CD8-positive, alpha-beta memory T cell (primary cell): ENCODE measurements at regions of chr13 and their contacts with region 1.

Region 1: DNA sequence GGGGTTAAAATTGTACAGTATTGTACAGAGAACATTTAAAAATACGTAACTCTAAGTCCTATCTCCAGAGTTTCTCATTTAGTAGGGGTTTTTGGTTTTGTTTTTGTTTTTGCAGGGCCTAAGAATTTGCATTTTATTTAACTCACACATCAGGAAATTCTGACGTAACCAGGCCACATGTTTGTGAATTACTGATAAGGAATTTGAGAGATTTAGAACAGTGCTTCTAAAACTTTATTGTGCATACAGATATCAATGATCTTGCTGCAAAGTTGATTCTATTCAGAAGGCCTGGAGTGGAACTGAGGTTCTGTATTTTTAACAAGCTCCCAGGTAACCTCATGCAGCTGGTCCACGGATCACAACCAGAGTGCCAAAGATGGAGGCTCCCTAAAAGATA is 49.3 kb downstream of the LIG4 start:
- DNase-seq: no peak
- H3K4me3 ChIP-seq: no peak overlapping the region
- H3K4me3 Mint-ChIP-seq: no peak overlapping the region
- H3K27ac ChIP-seq: no peak overlapping the region
- H3K27ac Mint-ChIP-seq: no peak overlapping the region
- H3K4me1 ChIP-seq: no peaks in the 10 kb centered on the region
- H3K4me1 Mint-ChIP-seq: no peaks in the 10 kb centered on the region
- H3K27me3 ChIP-seq: no peaks in the 10 kb centered on the region
- H3K27me3 Mint-ChIP-seq: peaks cover 6 to 7% of the 10 kb centered on the region in 2 donors

Region 2: DNA sequence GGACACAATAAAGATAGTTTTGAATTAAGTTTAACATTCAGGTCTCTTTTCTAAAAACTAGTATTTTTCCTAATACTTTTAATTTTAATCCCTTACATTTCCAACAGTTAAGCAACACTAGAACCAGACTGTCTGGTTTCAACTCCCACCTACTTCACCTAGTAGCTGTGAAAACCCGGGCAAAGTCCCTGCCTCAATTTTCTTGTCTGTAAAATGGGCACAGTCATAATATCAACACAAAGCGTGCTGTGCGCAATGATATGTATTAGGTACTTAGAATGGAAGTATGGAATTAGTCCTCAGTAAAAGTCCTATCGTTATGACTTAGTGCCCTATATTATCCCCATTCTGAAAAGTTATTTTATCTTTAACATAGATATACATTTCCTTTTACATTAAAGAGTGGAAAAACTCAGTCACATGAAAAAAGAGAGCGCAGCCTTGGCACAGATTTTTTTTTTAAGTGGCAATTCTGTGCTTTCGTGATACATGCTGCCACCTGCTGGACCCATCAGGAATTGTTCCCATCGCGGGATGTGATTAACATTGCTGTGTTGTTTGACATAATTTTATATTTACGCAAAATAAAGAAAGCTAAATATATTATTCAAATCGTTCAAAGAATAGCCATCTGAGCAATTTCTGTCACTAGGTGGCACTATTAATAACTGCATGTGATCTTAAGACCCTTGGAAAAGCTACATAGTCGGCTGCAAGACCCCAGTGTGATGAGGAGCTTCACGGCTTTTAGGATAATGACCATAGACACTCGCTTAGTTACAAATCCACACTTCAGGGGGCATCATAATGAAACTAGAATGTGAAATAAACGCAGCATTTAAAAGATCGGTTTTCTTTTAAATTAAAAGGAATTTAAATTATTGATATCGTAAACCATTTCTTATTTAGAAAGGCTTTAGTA is 10.6 kb before region 1 on chr13:
- CTCF ChIA-PET with region 1: interaction called, 15 read pairs
- POLR2A ChIA-PET with region 1: no interaction called
- DNase-seq: peak; percentile 10 to 59 (median 34)
- H3K4me3 ChIP-seq: no peak overlapping the region
- H3K4me3 Mint-ChIP-seq: no peak overlapping the region
- H3K27ac ChIP-seq: no peak overlapping the region
- H3K27ac Mint-ChIP-seq: no peak overlapping the region
- H3K4me1 ChIP-seq: no peaks in the 10 kb centered on the region
- H3K4me1 Mint-ChIP-seq: no peaks in the 10 kb centered on the region
- H3K27me3 ChIP-seq: no peaks in the 10 kb centered on the region
- H3K27me3 Mint-ChIP-seq: peaks cover 3 to 17% of the 10 kb centered on the region in 2 donors

Region 3: GRCh38 chr13:108227651-108228272 is 61.7 kb after region 1 on chr13:
- CTCF ChIA-PET with region 1: no interaction called
- POLR2A ChIA-PET with region 1: no interaction called
- DNase-seq: peak in 2 of 5 donors; percentile 26 to 38
- H3K4me3 ChIP-seq: no peak overlapping the region
- H3K4me3 Mint-ChIP-seq: no peak overlapping the region
- H3K27ac ChIP-seq: no peak overlapping the region
- H3K27ac Mint-ChIP-seq: peak overlapping the region in 1 of 8 donors; percentile 7
- H3K4me1 ChIP-seq: peaks cover 27% of the 10 kb centered on the region
- H3K4me1 Mint-ChIP-seq: peaks cover 56 to 72% (median 71%) of the 10 kb centered on the region in 3 donors
- H3K27me3 ChIP-seq: no peaks in the 10 kb centered on the region
- H3K27me3 Mint-ChIP-seq: no peaks in the 10 kb centered on the region